ENCODE measurements at regions of chr13 and their contacts with region 1.

Region 1: GRCh38 chr13:51797664-51798488 is 6.1 kb downstream of the DHRS12 start:
- DNase-seq: peak; percentile 73
- ATAC-seq: peak; percentile 55
- H3K4me3 Mint-ChIP-seq: no peak overlapping the region
- H3K27ac Mint-ChIP-seq: no peak overlapping the region
- H3K4me1 Mint-ChIP-seq: peaks cover 42% of the 10 kb centered on the region
- H3K27me3 Mint-ChIP-seq: no peaks in the 10 kb centered on the region
- CTCF ChIP-seq: peak; percentile 55

Region 2: DNA sequence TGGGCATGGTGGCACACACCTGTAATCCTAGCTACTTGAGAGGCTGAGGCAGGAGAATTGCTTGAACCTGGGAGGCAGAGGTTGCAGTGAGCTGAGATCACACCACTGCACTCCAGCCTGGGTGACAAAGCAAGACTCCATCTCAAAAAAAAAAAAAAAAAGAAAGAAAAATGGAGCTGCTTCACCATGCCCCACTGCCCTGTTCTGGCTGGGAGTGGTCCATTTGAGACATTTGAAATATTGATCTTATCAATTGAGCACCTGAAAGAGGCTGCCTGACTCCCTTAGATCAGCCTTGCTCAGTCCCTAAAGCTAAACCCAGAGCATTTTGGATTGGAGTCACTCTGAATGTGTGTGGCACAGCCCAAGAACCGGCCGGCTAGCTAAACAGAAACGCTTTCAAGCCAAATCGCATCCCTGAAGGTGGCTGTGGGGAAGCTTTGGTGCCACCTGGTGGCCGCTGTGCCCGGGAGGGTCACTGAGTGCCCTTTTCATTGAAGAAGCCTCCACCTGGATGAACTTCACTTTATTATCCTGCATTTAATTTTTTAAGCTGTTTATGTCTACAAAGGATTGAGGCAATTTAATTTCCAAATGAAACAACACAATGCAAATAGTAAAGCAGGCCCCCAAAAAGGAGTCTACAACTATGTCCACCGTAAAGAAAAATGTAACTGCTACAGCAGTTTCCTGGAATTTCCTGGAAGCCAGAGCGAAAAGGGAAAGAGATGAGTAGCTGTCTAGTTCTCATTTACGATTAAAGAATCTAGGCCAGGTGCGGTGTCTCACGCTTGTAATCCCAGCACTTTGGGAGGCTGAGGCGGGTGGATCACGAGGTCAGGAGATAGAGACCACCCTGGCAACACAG is 511.5 kb before region 1 on chr13:
- CTCF ChIA-PET with region 1: interaction called, 26 read pairs
- POLR2A ChIA-PET with region 1: no interaction called
- intact Hi-C with region 1: no loop called
- DNase-seq: peak; percentile 86
- ATAC-seq: peak; percentile 89
- H3K4me3 Mint-ChIP-seq: no peak overlapping the region
- H3K27ac Mint-ChIP-seq: no peak overlapping the region
- H3K4me1 Mint-ChIP-seq: peaks cover 6% of the 10 kb centered on the region
- H3K27me3 Mint-ChIP-seq: no peaks in the 10 kb centered on the region
- CTCF ChIP-seq: peak; percentile 88

Region 3: GRCh38 chr13:51435002-51435578 is 362.8 kb before region 1 on chr13:
- CTCF ChIA-PET with region 1: interaction called, 37 read pairs
- POLR2A ChIA-PET with region 1: interaction called, 3 read pairs
- intact Hi-C with region 1: loop called (anchors 5 kb)
- DNase-seq: no peak
- ATAC-seq: no peak
- H3K4me3 Mint-ChIP-seq: no peak overlapping the region
- H3K27ac Mint-ChIP-seq: no peak overlapping the region
- H3K4me1 Mint-ChIP-seq: peaks cover 19% of the 10 kb centered on the region
- H3K27me3 Mint-ChIP-seq: no peaks in the 10 kb centered on the region
- CTCF ChIP-seq: peak; percentile 68

Region 4: DNA sequence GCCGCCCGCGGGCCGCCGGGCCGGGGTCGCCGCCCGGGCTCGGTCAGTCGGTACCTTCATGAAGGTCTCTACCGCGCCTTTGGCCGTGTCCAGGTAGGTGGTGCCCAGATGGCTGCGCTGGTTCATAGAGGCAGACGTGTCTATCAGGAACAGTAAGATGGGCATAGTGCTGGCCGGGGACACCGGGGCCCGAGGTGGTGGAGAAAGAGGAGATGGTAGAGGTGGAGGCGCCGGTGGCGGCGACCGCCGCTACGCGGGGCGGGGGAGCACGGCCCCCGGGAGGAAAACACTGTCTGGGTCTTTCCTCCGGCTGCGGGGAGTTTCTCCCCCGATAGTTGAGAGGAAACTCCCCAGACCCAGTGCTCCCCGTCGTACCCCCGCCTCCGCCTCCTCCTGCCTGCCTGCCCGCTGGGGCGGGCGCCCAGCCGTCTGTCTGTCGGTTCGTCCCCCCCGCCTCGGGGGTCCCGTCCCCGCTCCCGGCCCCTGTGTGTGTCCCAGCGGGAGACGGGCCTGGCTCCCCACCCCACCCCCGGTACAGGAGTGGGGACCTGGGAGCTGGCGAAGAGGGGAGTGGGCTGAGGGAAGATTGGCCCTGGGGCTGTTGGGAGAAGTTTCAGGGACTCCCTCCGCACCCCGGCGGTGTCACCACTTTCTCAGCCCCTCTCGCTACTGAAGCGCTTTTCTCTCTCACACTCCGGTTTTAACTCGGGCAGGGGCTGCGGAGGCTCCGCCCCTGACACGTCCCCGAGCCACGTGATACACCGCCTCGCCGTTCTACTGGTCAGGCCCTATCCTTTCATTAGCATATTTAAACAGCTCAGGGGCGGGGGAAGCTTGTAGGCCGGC is 345.3 kb before region 1 on chr13 and contains the start of gene INTS6:
- CTCF ChIA-PET with region 1: interaction called, 19 read pairs
- POLR2A ChIA-PET with region 1: interaction called, 7 read pairs
- intact Hi-C with region 1: loop called (anchors 2 kb)
- DNase-seq: peak; percentile 99
- ATAC-seq: peak; percentile 86
- H3K4me3 Mint-ChIP-seq: peak within 1 kb of the TSS; percentile 94
- H3K27ac Mint-ChIP-seq: peak within 1 kb of the TSS; percentile 99
- H3K4me1 Mint-ChIP-seq: peaks cover 40% of the 10 kb centered on the region
- H3K27me3 Mint-ChIP-seq: no peaks in the 10 kb centered on the region
- CTCF ChIP-seq: no peak
- total RNA-seq, gene INTS6: 52.4 to 54.5 TPM

Region 5: DNA sequence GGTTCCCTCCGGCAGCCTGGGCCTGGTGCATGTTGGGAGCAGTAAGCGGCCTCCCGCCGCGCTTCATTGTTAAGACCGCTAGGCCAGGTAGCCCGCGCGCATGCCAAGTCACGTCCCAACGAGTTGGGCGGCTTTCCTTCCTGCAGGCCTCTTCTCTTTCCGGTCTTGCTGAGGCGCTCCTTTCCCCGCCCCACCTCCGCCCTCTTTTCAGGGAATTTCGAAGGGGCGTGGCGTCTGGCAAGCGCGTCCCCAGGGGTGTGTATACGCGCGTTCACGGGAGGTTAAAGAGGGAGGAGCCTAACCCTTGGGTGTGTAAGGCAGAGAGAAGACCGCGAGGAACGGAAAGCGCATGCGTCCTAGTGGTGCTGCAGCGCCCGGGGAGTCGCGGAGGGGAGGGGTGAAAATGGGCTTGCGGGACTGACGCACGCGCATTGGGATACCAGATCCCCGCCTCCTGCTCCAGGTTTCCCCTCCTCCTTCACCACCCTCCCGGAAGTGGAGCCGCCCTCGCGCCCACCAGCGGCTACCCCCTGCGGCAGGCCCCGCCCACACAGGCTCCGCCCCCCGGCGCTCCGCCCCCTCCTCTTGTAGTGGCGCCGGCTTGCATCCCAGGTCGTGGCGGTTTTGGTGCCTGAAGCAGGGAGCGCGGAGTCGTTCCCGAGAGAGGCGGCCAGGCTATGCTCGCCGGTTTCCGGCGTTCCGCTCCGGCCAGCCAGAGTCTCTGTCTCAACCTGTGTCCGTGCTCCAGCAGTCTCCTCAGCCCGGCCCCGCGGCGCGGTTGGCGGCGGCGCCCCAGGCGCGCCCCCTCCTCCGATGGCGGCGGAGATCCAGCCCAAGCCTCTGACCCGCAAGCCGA is 213.8 kb before region 1 on chr13 and contains the start of gene WDFY2:
- CTCF ChIA-PET with region 1: interaction called, 17 read pairs
- POLR2A ChIA-PET with region 1: interaction called, 4 read pairs
- intact Hi-C with region 1: loop called (anchors 5 kb)
- DNase-seq: peak; percentile 99
- ATAC-seq: peak; percentile 90
- H3K4me3 Mint-ChIP-seq: peak within 1 kb of the TSS; percentile 80
- H3K27ac Mint-ChIP-seq: peak within 1 kb of the TSS; percentile 96
- H3K4me1 Mint-ChIP-seq: peaks cover 38% of the 10 kb centered on the region
- H3K27me3 Mint-ChIP-seq: no peaks in the 10 kb centered on the region
- CTCF ChIP-seq: no peak
- total RNA-seq, gene WDFY2: 11.2 to 11.6 TPM

Region 6: DNA sequence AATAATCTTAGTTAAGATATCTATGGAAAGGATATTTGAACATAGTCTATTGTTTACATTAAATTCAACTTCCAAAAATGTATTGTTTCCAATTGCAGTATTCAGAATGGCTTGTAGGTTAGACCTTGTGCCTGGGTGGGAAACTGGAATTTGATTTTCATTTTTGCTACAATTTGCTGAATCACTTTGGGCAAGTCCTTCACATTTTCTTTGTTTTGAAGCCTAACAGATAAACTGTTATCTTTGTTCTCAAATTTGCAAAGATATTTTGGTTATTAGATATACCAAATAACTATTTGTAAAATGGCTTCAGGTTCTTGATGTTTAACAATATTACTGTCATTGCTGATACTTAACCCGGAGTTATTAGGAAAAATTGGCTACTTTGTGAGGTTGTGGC is 131.0 kb before region 1 on chr13:
- CTCF ChIA-PET with region 1: no interaction called
- POLR2A ChIA-PET with region 1: no interaction called
- intact Hi-C with region 1: no loop called
- DNase-seq: no peak
- ATAC-seq: no peak
- H3K4me3 Mint-ChIP-seq: no peak overlapping the region
- H3K27ac Mint-ChIP-seq: no peak overlapping the region
- H3K4me1 Mint-ChIP-seq: peaks cover 26% of the 10 kb centered on the region
- H3K27me3 Mint-ChIP-seq: no peaks in the 10 kb centered on the region
- CTCF ChIP-seq: no peak

Region 7: DNA sequence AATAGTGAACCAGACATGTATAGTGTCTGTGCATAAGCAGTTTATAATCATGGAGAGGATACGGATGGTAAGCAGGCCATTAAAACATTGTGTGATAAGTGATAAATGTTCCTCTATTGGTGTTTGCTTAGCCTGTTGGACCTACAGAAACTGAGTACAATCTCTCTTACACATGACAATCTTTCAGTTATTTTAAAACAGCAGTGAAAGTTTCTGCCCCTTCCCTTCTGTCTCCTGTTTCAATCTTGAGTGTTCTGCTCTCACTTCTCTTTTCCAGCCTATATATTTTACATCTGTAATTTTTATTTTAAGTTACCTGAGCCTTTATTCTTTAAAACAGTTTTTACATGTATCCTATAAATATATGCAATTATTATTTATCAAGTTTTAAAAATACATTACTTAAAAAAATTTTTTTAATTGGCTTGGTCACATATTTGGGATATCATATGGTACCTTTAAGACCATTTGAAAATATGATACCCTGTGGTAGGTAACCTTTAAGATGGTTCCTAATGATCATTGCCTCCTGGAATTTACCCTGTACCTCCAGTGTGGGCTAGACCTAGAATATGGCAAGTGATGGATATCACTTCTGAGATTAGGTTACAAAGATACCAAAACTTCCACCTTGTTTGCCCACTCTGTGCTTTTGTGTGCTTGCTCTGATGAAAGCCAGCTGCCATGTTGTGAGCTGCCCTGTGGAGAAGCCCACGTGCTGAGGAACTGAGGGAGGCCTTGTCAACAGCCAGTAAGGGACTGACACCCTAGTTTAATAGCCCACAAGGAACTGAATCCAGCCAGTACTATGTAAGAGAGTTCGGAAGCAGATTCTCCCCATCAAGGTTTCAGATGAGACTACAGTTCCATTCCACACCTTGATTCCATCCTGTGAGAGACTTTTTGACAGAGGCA is 93.2 kb before region 1 on chr13:
- CTCF ChIA-PET with region 1: no interaction called
- POLR2A ChIA-PET with region 1: no interaction called
- intact Hi-C with region 1: no loop called
- DNase-seq: no peak
- ATAC-seq: no peak
- H3K4me3 Mint-ChIP-seq: no peak overlapping the region
- H3K27ac Mint-ChIP-seq: no peak overlapping the region
- H3K4me1 Mint-ChIP-seq: no peaks in the 10 kb centered on the region
- H3K27me3 Mint-ChIP-seq: no peaks in the 10 kb centered on the region
- CTCF ChIP-seq: no peak

Region 8: DNA sequence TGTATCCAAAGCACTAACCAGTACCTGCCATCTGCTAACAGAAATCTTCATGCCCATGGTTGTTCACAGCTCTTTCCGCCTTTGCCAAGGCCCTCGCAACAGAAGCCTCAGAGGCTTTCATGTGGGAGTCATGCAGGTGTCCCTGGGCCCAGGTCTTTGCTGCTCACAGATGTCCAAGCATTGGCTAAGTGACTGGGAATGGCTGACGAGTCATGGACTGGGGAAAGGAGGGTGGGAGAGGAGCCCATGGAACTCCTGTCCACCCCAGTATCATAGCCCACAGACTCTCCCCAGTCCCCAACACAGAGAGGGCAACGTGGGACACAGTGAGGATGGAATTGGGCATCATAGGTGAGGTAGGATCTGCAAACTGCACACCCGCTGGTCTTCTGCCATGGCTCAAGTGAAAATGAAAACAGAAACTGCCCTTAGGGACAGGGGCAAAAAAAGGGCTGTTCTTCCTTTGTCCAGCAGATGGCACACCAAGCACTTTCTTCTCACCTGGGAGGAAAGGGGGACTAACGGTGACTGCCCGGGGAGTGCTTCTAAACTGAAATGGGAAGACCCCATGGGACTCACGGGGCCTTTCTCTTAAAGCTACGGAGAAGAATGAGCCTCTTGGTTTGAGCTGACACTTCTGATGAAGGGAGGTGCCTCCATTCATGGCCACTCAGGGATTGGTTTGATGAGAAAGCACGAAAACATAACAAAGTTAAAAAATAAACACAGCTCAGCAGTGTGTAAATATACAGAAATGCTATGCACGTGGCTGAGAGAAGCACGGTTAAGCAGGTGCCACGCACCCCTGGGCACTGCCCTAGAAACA is 17.2 kb after region 1 on chr13:
- CTCF ChIA-PET with region 1: interaction called, 20 read pairs
- POLR2A ChIA-PET with region 1: interaction called, 7 read pairs
- intact Hi-C with region 1: no loop called
- DNase-seq: peak; percentile 87
- ATAC-seq: peak; percentile 74
- H3K4me3 Mint-ChIP-seq: peak overlapping the region; percentile 53
- H3K27ac Mint-ChIP-seq: peak overlapping the region; percentile 87
- H3K4me1 Mint-ChIP-seq: peaks cover 74% of the 10 kb centered on the region
- H3K27me3 Mint-ChIP-seq: no peaks in the 10 kb centered on the region
- CTCF ChIP-seq: peak; percentile 76

Region 9: GRCh38 chr13:51844862-51845573 is 47.1 kb after region 1 on chr13 and contains the start of gene TMEM272:
- CTCF ChIA-PET with region 1: interaction called, 10 read pairs
- POLR2A ChIA-PET with region 1: interaction called, 3 read pairs
- intact Hi-C with region 1: no loop called
- DNase-seq: peak; percentile 70
- ATAC-seq: peak; percentile 91
- H3K4me3 Mint-ChIP-seq: peak within 1 kb of the TSS; percentile 60
- H3K27ac Mint-ChIP-seq: no peak within 1 kb of the TSS
- H3K4me1 Mint-ChIP-seq: peaks cover 12% of the 10 kb centered on the region
- H3K27me3 Mint-ChIP-seq: peaks cover 4% of the 10 kb centered on the region
- CTCF ChIP-seq: peak; percentile 98
- total RNA-seq, gene TMEM272: 0.18 to 0.32 TPM

Region 10: GRCh38 chr13:51887468-51887867 is 89.6 kb after region 1 on chr13:
- CTCF ChIA-PET with region 1: no interaction called
- POLR2A ChIA-PET with region 1: no interaction called
- intact Hi-C with region 1: no loop called
- DNase-seq: no peak
- ATAC-seq: no peak
- H3K4me3 Mint-ChIP-seq: no peak overlapping the region
- H3K27ac Mint-ChIP-seq: no peak overlapping the region
- H3K4me1 Mint-ChIP-seq: no peaks in the 10 kb centered on the region
- H3K27me3 Mint-ChIP-seq: no peaks in the 10 kb centered on the region
- CTCF ChIP-seq: no peak

Measured in activated CD8-positive, alpha-beta T cell treated with anti-CD3 and anti-CD28 coated beads for 36 hours (primary cell).